Spleen (tissue), 13 donors: ENCODE measurements at regions of chr1 and their contacts with region 1.

Region 1: GRCh38 chr1:69737527-69738185 is 169.9 kb downstream of the LRRC7 start:
- DNase-seq: no peak
- H3K4me3 ChIP-seq: no peak overlapping the region
- H3K27ac ChIP-seq: no peak overlapping the region
- H3K4me1 ChIP-seq: no peaks in the 10 kb centered on the region
- H3K27me3 ChIP-seq: no peaks in the 10 kb centered on the region
- CTCF ChIP-seq: peak in 9 of 11 experiments; percentile 13 to 69 (median 52)
- POLR2A ChIP-seq: no peak

Region 2: GRCh38 chr1:68600049-68600661 is 1137.5 kb before region 1 on chr1:
- intact Hi-C with region 1: loop called (anchors 10 kb)
- DNase-seq: no peak
- H3K4me3 ChIP-seq: no peak overlapping the region
- H3K27ac ChIP-seq: no peak overlapping the region
- H3K4me1 ChIP-seq: no peaks in the 10 kb centered on the region
- H3K27me3 ChIP-seq: no peaks in the 10 kb centered on the region
- CTCF ChIP-seq: peak in 3 of 11 experiments; percentile 5 to 34 (median 29)
- POLR2A ChIP-seq: no peak

Region 3: DNA sequence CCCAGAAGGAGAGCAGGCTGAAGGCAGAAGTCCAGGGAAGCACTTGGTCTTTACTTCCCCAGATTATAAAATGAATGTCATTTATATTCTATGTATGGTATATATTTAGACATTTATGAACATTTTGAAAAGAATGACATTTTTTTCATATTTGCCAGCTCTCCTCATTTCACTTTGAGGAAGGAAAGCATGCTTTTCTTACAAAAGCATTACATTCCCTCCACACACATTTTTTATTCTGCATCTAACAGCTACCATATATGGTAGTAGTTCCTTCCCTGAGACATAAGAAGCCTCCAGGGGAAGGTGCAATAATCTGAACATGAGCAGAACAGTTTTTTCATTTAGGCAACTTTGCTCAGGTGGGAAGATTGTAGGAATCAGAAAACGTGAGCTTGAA is 76.0 kb before region 1 on chr1:
- intact Hi-C with region 1: no loop called
- DNase-seq: no peak
- H3K4me3 ChIP-seq: no peak overlapping the region
- H3K27ac ChIP-seq: no peak overlapping the region
- H3K4me1 ChIP-seq: no peaks in the 10 kb centered on the region
- H3K27me3 ChIP-seq: no peaks in the 10 kb centered on the region
- CTCF ChIP-seq: no peak
- POLR2A ChIP-seq: no peak